T-cell (primary cell): ENCODE measurements at regions of chr6 and their contacts with region 1.

Region 1: GRCh38 chr6:37705239-37706051 is 7.8 kb upstream of the MDGA1 start:
- DNase-seq: peak; percentile 54 to 84 (median 74)
- ATAC-seq: peak; percentile 82 to 91 (median 86)
- H3K4me3 ChIP-seq: peak overlapping the region; percentile 49 to 52
- H3K4me3 Mint-ChIP-seq: peak overlapping the region; percentile 71 to 82 (median 79)
- H3K27ac ChIP-seq: peak overlapping the region; percentile 24
- H3K27ac Mint-ChIP-seq: peak overlapping the region; percentile 47 to 89
- H3K4me1 ChIP-seq: peaks cover 0 to 12% of the 10 kb centered on the region in 2 experiments
- H3K4me1 Mint-ChIP-seq: peaks cover 11 to 16% (median 13%) of the 10 kb centered on the region in 3 donors
- H3K27me3 ChIP-seq: peaks cover 0 to 14% of the 10 kb centered on the region in 2 experiments
- H3K27me3 Mint-ChIP-seq: no peaks in the 10 kb centered on the region

Region 2: GRCh38 chr6:37499433-37500293 is 205.8 kb before region 1 on chr6 and contains the start of gene CCDC167:
- CTCF ChIA-PET with region 1: interaction called in 1 of 2 experiments, 11 read pairs
- POLR2A ChIA-PET with region 1: no interaction called
- DNase-seq: peak; percentile 86 to 98 (median 93)
- ATAC-seq: peak; percentile 70 to 90 (median 86)
- H3K4me3 ChIP-seq: peak within 1 kb of the TSS; percentile 80 to 85
- H3K4me3 Mint-ChIP-seq: peak within 1 kb of the TSS; percentile 94 to 96 (median 94)
- H3K27ac ChIP-seq: peak within 1 kb of the TSS; percentile 81
- H3K27ac Mint-ChIP-seq: peak within 1 kb of the TSS; percentile 90 to 99
- H3K4me1 ChIP-seq: peaks cover 45 to 87% of the 10 kb centered on the region in 2 experiments
- H3K4me1 Mint-ChIP-seq: peaks cover 61 to 89% (median 82%) of the 10 kb centered on the region in 3 donors
- H3K27me3 ChIP-seq: no peaks in the 10 kb centered on the region
- H3K27me3 Mint-ChIP-seq: no peaks in the 10 kb centered on the region
- total RNA-seq, gene CCDC167: 14.3 to 25.2 (median 17.8) TPM

Region 3: DNA sequence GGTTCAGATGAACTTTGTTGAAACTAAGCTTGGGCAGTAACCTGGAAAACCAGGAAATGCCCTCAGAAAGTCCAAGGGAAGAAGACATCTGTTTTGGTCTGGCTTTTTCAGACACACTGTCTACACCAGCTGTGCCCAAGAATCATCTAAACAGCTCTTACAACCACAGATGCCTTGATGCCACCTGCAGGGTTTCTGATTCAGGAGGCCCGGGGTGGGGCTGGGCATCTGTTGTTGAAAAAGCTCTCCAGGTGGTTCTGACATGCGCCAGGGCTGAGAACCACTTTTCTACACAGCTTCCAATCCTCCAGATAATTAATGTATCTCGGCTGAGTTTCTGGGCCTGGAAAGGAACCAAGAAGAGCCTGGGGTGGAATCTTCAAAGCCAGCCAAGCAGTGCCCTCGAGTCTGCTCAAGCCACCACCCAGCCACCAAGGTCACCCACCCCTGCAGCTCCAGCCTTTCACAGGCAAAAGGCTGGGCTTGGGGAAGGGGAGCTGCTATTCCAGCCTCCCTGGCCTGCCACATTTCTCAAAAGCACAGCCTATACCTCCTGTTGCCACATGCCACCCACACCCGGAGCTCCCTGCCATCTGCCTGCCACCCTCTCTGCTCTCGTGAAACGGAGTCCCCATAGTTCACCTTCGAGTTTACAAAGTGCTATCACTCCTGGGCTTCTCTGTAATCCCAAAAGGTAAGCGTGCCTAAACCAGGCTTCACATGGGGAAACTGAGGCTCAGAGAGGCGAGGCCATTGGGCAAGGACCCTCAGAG is 17.2 kb before region 1 on chr6:
- CTCF ChIA-PET with region 1: interaction called in 1 of 2 experiments, 4 read pairs
- POLR2A ChIA-PET with region 1: interaction called in 1 of 2 experiments, 12 read pairs
- DNase-seq: peak in 1 of 35 experiments; percentile 19
- ATAC-seq: no peak
- H3K4me3 ChIP-seq: no peak overlapping the region
- H3K4me3 Mint-ChIP-seq: no peak overlapping the region
- H3K27ac ChIP-seq: no peak overlapping the region
- H3K27ac Mint-ChIP-seq: no peak overlapping the region
- H3K4me1 ChIP-seq: peaks cover 0 to 9% of the 10 kb centered on the region in 2 experiments
- H3K4me1 Mint-ChIP-seq: peaks cover 0 to 32% (median 21%) of the 10 kb centered on the region in 3 donors
- H3K27me3 ChIP-seq: peaks cover 2 to 12% of the 10 kb centered on the region in 2 experiments
- H3K27me3 Mint-ChIP-seq: peaks cover 0 to 6% of the 10 kb centered on the region in 2 donors

Region 4: DNA sequence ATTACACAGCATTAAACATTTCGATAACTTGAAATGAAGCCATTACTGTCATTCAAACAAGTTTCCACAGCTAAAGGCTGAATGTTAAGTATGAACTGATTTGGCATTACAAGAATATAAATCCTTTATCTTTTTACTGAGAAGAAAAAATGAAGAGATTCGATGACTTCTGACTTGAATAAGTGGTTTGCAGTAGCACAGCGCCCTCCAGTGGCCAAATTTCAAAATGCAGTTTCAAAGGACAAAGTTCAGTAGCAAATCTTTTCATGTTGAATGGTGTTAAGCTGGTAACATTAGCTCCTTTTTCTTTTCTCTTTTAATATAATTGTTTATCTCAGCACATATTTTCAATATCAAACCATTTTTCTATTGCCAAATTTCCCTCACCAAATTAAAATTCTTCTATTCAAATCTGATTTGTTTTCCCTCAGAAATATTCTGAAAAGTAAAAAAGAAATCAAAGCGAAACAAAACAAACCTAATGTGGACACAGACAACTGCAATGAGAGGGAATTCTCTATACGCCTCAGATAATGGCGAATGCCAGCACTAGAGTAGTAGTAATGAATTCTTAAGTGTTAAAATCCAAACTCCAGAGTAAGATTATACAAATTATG is 788.6 kb after region 1 on chr6:
- CTCF ChIA-PET with region 1: interaction called, 3 to 15 read pairs
- POLR2A ChIA-PET with region 1: no interaction called
- DNase-seq: peak; percentile 28 to 84 (median 70)
- ATAC-seq: peak in 1 of 4 experiments; percentile 50
- H3K4me3 ChIP-seq: no peak overlapping the region
- H3K4me3 Mint-ChIP-seq: no peak overlapping the region
- H3K27ac ChIP-seq: no peak overlapping the region
- H3K27ac Mint-ChIP-seq: no peak overlapping the region
- H3K4me1 ChIP-seq: no peaks in the 10 kb centered on the region
- H3K4me1 Mint-ChIP-seq: peaks cover 0 to 4% (median 4%) of the 10 kb centered on the region in 3 donors
- H3K27me3 ChIP-seq: no peaks in the 10 kb centered on the region
- H3K27me3 Mint-ChIP-seq: no peaks in the 10 kb centered on the region